Endothelial cell of umbilical vein (primary cell): ENCODE measurements at regions of chr14 and their contacts with region 1.

Region 1: DNA sequence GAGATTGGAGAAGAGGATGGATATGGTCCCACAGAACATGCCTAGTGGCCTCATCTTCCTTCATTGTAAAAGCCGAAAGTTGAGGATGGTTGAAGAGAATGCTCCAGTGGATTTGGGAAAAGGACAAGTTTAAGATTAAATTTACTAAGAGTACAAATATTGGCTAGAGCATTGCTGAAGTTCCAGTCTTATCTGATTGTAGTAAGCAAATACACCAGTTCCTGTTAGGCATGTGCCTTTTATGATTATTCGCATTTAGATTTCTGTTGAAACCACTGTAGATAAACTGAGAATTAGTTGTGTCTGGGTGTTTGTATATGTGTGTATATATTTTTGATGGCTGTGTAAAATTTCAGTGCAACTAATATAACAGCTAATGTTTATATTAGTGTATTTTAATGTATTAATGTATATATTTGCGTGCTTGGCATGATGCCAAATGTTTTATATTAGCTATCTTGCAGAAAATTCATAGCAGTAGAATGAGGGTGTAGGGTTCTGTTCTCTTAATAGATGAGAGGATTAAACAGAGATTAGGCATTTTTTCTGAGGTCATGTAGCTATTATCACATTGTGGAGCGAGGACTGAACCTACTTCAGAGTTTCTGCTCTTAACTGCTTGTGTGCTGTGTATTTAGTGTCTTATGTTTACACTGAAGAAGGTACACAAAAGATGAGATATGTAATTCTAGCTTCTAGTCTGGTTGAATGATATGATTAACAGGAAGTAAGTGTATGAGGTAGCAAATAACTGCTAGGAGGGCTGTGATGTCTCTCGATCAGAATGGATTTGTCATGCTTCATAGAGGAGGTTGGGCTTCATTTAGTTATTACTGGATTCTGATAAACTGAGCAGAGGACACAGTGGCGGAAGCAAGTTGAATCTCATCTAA is 21.1 kb downstream of the FKBP3 start:
- DNase-seq: peak; percentile 51
- H3K4me3 ChIP-seq: no peak overlapping the region
- H3K27ac ChIP-seq: no peak overlapping the region
- H3K4me1 ChIP-seq: peaks cover 14% of the 10 kb centered on the region
- H3K27me3 ChIP-seq: no peaks in the 10 kb centered on the region
- CTCF ChIP-seq: no peak
- POLR2A ChIP-seq: no peak

Region 2: GRCh38 chr14:45128963-45129629 is 16.0 kb after region 1 on chr14:
- CTCF ChIA-PET with region 1: interaction called, 15 read pairs
- POLR2A ChIA-PET with region 1: interaction called, 4 read pairs
- dilution Hi-C with region 1: no loop called
- intact Hi-C with region 1: loop called (anchors 2 kb)
- DNase-seq: no peak
- H3K4me3 ChIP-seq: no peak overlapping the region
- H3K27ac ChIP-seq: no peak overlapping the region
- H3K4me1 ChIP-seq: peaks cover 3% of the 10 kb centered on the region
- H3K27me3 ChIP-seq: no peaks in the 10 kb centered on the region
- CTCF ChIP-seq: no peak
- POLR2A ChIP-seq: no peak

Region 3: GRCh38 chr14:45364393-45365156 is 251.4 kb after region 1 on chr14:
- CTCF ChIA-PET with region 1: no interaction called
- POLR2A ChIA-PET with region 1: no interaction called
- dilution Hi-C with region 1: no loop called
- intact Hi-C with region 1: no loop called
- DNase-seq: no peak
- H3K4me3 ChIP-seq: no peak overlapping the region
- H3K27ac ChIP-seq: no peak overlapping the region
- H3K4me1 ChIP-seq: no peaks in the 10 kb centered on the region
- H3K27me3 ChIP-seq: no peaks in the 10 kb centered on the region
- CTCF ChIP-seq: no peak
- POLR2A ChIP-seq: no peak